ENCODE measurements at regions of chr3 and their contacts with region 1.

Region 1: GRCh38 chr3:149812606-149813366 is at the start of gene RNF13:
- DNase-seq: peak; percentile 96
- H3K4me3 Mint-ChIP-seq: peak within 1 kb of the TSS; percentile 97
- H3K27ac Mint-ChIP-seq: peak within 1 kb of the TSS; percentile 99
- H3K4me1 Mint-ChIP-seq: peaks cover 43% of the 10 kb centered on the region
- H3K27me3 Mint-ChIP-seq: no peaks in the 10 kb centered on the region
- total RNA-seq, gene RNF13: 22.9 to 25.5 TPM

Region 2: GRCh38 chr3:149512209-149512782 is 300.5 kb before region 1 on chr3:
- CTCF ChIA-PET with region 1: interaction called, 7 read pairs
- intact Hi-C with region 1: loop called (anchors 1 kb)
- DNase-seq: peak; percentile 59
- H3K4me3 Mint-ChIP-seq: no peak overlapping the region
- H3K27ac Mint-ChIP-seq: no peak overlapping the region
- H3K4me1 Mint-ChIP-seq: peaks cover 14% of the 10 kb centered on the region
- H3K27me3 Mint-ChIP-seq: peaks cover 15% of the 10 kb centered on the region

Region 3: DNA sequence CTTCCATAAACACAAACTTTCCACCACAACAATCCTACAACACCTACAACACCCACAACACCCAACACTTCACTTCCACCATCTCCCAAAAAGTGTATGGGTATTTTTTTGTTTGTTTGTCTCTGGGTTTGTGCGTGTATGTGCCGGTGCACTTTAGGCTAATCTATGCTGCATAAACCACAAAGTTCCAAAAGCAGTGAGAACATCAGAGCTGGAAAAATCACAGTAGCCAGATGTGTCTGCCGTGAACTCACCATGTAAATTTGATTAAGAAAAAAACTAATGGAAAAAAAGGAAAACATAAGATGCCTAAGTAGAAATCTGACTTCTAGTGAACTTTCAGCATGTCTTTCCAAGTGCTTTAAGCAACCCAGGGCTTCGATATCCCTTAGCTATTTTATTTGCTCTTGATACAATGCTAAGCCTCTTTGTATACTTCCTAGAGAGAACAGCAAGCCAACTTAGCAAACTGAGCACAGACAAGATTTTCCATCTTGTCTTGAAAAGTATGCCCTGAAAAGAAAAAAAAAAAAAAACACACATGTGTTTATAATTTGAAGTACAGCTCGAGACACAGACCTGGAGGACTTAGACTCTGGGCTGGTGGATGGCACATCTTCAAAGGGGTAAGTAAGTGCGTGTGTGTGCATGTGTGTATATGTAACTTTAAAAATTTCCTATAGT is 246.4 kb before region 1 on chr3:
- CTCF ChIA-PET with region 1: interaction called, 15 read pairs
- intact Hi-C with region 1: loop called (anchors 1 kb)
- DNase-seq: no peak
- H3K4me3 Mint-ChIP-seq: no peak overlapping the region
- H3K27ac Mint-ChIP-seq: no peak overlapping the region
- H3K4me1 Mint-ChIP-seq: no peaks in the 10 kb centered on the region
- H3K27me3 Mint-ChIP-seq: no peaks in the 10 kb centered on the region

Region 4: GRCh38 chr3:149752051-149752787 is 60.6 kb before region 1 on chr3 and contains the start of gene COMMD2:
- CTCF ChIA-PET with region 1: interaction called, 8 read pairs
- intact Hi-C with region 1: loop called (anchors 1 kb)
- DNase-seq: peak; percentile 89
- H3K4me3 Mint-ChIP-seq: peak within 1 kb of the TSS; percentile 96
- H3K27ac Mint-ChIP-seq: peak within 1 kb of the TSS; percentile 87
- H3K4me1 Mint-ChIP-seq: peaks cover 26% of the 10 kb centered on the region
- H3K27me3 Mint-ChIP-seq: no peaks in the 10 kb centered on the region
- total RNA-seq, gene COMMD2: 27.3 to 28.0 TPM

Region 5: DNA sequence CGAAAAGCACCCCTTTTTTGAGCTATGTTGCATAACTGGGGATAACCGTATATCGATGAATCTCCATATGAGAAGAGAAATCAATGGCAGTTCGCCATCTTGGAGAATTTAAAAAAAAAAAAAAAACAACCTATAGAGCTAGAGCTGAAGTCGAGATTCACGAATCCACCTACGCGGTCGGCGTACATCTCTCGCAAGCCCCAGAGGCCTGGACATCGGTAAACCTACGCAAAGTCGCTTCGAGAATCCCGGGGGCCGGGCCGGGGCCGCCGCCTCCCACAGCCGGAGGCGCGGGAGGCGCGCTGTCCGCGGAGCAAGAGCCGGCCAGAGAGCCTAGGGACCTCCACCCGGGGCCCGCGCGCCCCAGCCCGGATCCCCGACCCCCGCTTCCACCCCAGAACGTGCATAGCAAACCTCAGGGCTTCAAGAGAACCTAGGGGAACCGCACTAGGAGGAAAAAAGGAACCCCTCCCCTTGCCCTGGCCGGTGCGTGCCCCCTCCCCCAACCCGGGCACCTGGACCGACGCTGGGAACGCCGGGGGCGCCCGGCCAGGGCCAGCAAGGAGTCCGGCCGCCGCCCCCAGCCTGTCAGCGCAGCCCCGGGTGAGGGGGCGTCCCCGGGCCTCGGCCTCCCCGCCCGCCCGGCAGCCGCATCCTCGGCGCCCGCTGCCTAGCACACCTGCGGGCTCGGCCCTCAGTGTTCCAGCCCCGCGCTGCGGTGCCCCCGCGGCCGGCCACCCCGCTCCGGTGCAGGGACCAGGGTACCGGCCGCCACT is 157.3 kb after region 1 on chr3:
- CTCF ChIA-PET with region 1: no interaction called
- intact Hi-C with region 1: loop called (anchors 1 kb)
- DNase-seq: peak; percentile 79
- H3K4me3 Mint-ChIP-seq: peak overlapping the region; percentile 87
- H3K27ac Mint-ChIP-seq: peak overlapping the region; percentile 30
- H3K4me1 Mint-ChIP-seq: peaks cover 11% of the 10 kb centered on the region
- H3K27me3 Mint-ChIP-seq: peaks cover 20% of the 10 kb centered on the region

Region 6: DNA sequence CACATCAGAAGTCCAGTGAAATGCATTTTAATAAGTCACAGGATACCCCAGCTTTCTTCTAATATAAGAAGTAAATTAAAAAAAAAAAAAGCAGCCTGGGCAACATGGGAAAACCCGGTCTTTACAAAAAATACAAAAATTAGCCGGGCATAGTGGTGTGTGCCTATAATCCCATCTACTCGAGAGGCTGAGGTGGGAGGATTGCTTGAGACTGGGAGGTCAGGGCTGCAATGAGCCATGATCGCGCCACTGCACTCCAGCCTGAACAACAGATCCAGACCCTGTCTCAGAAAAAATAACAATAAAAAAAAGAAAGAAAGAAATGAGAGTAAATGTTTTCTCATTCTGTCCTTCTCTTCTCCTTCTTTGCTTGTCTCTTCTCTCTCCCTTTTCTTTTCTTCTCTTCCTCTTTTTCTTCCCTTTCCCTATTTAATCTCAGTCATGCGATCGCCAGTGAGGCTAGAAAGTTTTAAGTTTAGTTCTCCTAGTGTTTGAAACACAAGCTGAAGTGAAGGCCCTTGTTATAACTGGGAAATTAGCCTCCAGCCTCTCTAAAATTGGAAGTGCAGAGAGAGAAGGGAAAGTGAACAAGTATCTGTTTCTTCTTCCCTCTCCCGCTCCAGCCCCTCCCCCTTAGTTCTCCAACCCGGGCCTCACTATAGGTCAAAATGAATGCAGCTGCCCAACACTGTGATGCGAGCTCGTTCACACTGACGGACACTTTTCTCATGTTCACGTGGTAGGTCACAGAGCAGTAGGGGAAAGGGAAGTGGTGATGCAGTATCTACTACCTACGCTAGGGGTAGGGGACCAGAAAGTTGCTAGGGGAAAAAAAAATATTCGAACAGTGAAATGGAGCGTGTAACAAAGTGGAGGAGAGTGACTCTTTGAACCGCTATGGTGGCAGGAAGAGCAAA is 571.8 kb after region 1 on chr3:
- CTCF ChIA-PET with region 1: no interaction called
- intact Hi-C with region 1: loop called (anchors 2 kb)
- DNase-seq: peak; percentile 71
- H3K4me3 Mint-ChIP-seq: peak overlapping the region; percentile 56
- H3K27ac Mint-ChIP-seq: peak overlapping the region; percentile 66
- H3K4me1 Mint-ChIP-seq: peaks cover 20% of the 10 kb centered on the region
- H3K27me3 Mint-ChIP-seq: no peaks in the 10 kb centered on the region

Region 7: GRCh38 chr3:150603153-150603979 is 790.6 kb after region 1 on chr3 and contains the start of gene SELENOT:
- CTCF ChIA-PET with region 1: no interaction called
- intact Hi-C with region 1: loop called (anchors 2 kb)
- DNase-seq: peak; percentile 93
- H3K4me3 Mint-ChIP-seq: peak within 1 kb of the TSS; percentile 96
- H3K27ac Mint-ChIP-seq: peak within 1 kb of the TSS; percentile 97
- H3K4me1 Mint-ChIP-seq: peaks cover 59% of the 10 kb centered on the region
- H3K27me3 Mint-ChIP-seq: no peaks in the 10 kb centered on the region
- total RNA-seq, gene SELENOT: 68.4 to 71.2 TPM